Caco-2 (cell line): ENCODE measurements at regions of chr1 and their contacts with region 1.

Region 1: GRCh38 chr1:158117854-158118704 is 62.6 kb upstream of the CD1D start:
- DNase-seq: peak; percentile 42 to 54
- H3K4me3 ChIP-seq: no peak overlapping the region
- H3K4me3 Mint-ChIP-seq: no peak overlapping the region
- H3K27ac Mint-ChIP-seq: no peak overlapping the region
- H3K4me1 ChIP-seq: no peaks in the 10 kb centered on the region
- H3K4me1 Mint-ChIP-seq: peaks cover 7% of the 10 kb centered on the region
- H3K27me3 ChIP-seq: no peaks in the 10 kb centered on the region
- H3K27me3 Mint-ChIP-seq: peaks cover 2% of the 10 kb centered on the region
- CTCF ChIP-seq: peak in 1 of 2 experiments; percentile 19

Region 2: GRCh38 chr1:157132641-157133053 is 985.4 kb before region 1 on chr1:
- CTCF ChIA-PET with region 1: no interaction called
- POLR2A ChIA-PET with region 1: interaction called, 11 read pairs
- intact Hi-C with region 1: no loop called
- DNase-seq: peak in 1 of 2 experiments; percentile 42
- H3K4me3 ChIP-seq: no peak overlapping the region
- H3K4me3 Mint-ChIP-seq: no peak overlapping the region
- H3K27ac Mint-ChIP-seq: peak overlapping the region; percentile 4
- H3K4me1 ChIP-seq: peaks cover 63% of the 10 kb centered on the region
- H3K4me1 Mint-ChIP-seq: peaks cover 43% of the 10 kb centered on the region
- H3K27me3 ChIP-seq: no peaks in the 10 kb centered on the region
- H3K27me3 Mint-ChIP-seq: no peaks in the 10 kb centered on the region
- CTCF ChIP-seq: no peak